ENCODE measurements at regions of chr3 and their contacts with region 1.

Region 1: GRCh38 chr3:124552239-124552638 is 178.0 kb upstream of the UMPS start:
- DNase-seq: no peak
- H3K4me3 ChIP-seq: no peak overlapping the region
- H3K4me3 Mint-ChIP-seq: no peak overlapping the region
- H3K27ac Mint-ChIP-seq: no peak overlapping the region
- H3K4me1 ChIP-seq: no peaks in the 10 kb centered on the region
- H3K4me1 Mint-ChIP-seq: no peaks in the 10 kb centered on the region
- H3K27me3 ChIP-seq: no peaks in the 10 kb centered on the region
- H3K27me3 Mint-ChIP-seq: peaks cover 4% of the 10 kb centered on the region
- CTCF ChIP-seq: no peak

Region 2: GRCh38 chr3:124014366-124014942 is 537.8 kb before region 1 on chr3:
- CTCF ChIA-PET with region 1: no interaction called
- POLR2A ChIA-PET with region 1: no interaction called
- intact Hi-C with region 1: loop called (anchors 1 kb)
- DNase-seq: no peak
- H3K4me3 ChIP-seq: no peak overlapping the region
- H3K4me3 Mint-ChIP-seq: no peak overlapping the region
- H3K27ac Mint-ChIP-seq: no peak overlapping the region
- H3K4me1 ChIP-seq: no peaks in the 10 kb centered on the region
- H3K4me1 Mint-ChIP-seq: peaks cover 6% of the 10 kb centered on the region
- H3K27me3 ChIP-seq: no peaks in the 10 kb centered on the region
- H3K27me3 Mint-ChIP-seq: peaks cover 19% of the 10 kb centered on the region
- CTCF ChIP-seq: no peak

Region 3: GRCh38 chr3:124486324-124486723 is 65.9 kb before region 1 on chr3:
- CTCF ChIA-PET with region 1: interaction called, 11 read pairs
- POLR2A ChIA-PET with region 1: no interaction called
- intact Hi-C with region 1: no loop called
- DNase-seq: no peak
- H3K4me3 ChIP-seq: no peak overlapping the region
- H3K4me3 Mint-ChIP-seq: no peak overlapping the region
- H3K27ac Mint-ChIP-seq: no peak overlapping the region
- H3K4me1 ChIP-seq: no peaks in the 10 kb centered on the region
- H3K4me1 Mint-ChIP-seq: no peaks in the 10 kb centered on the region
- H3K27me3 ChIP-seq: no peaks in the 10 kb centered on the region; the same call in 1 of the 2 replicates
- H3K27me3 Mint-ChIP-seq: peaks cover 10% of the 10 kb centered on the region
- CTCF ChIP-seq: peak in 1 of 2 experiments; percentile 28

Region 4: DNA sequence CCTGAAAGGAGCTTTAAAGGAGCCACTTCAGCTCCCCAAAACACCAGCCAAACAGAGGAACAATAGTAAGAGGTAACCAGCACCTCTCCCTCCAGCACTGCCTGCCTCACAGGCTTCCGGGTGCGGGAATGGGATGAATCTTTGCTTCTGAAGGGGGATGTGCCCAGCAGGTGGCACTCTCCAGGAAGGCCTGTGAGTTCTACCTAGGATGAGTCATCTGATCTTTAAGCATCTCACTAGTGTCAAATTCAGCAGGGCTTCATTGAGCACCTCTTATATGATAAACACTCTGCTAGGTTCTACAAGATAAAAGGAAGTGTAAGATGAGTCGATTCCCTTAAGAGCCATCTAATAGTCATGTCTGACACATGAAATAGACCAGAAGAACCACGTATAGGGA is 59.4 kb before region 1 on chr3:
- CTCF ChIA-PET with region 1: interaction called, 5 read pairs
- POLR2A ChIA-PET with region 1: no interaction called
- intact Hi-C with region 1: loop called (anchors 1 kb)
- DNase-seq: peak; percentile 68
- H3K4me3 ChIP-seq: no peak overlapping the region
- H3K4me3 Mint-ChIP-seq: no peak overlapping the region
- H3K27ac Mint-ChIP-seq: no peak overlapping the region
- H3K4me1 ChIP-seq: no peaks in the 10 kb centered on the region
- H3K4me1 Mint-ChIP-seq: no peaks in the 10 kb centered on the region
- H3K27me3 ChIP-seq: no peaks in the 10 kb centered on the region
- H3K27me3 Mint-ChIP-seq: no peaks in the 10 kb centered on the region
- CTCF ChIP-seq: peak; percentile 60 to 72

Region 5: DNA sequence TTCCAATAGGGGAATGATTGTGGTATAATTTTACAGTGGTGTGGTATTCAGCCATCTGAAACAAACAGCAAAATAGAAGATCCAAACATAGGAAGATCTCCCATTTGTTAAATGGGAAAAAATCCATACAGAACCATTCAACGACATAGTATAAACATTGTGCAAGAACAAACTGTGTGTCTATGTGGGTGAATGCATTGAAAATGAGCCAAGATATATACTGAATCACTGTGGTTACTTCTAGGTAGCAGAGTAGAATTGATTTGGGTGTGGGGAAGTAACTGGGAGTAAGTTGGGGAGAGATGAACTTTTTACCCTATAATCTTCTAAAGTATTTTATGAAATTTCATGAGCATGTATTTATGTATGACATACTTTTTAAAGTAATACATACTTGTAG is 54.9 kb after region 1 on chr3:
- CTCF ChIA-PET with region 1: no interaction called
- POLR2A ChIA-PET with region 1: no interaction called
- intact Hi-C with region 1: no loop called
- DNase-seq: no peak
- H3K4me3 ChIP-seq: no peak overlapping the region
- H3K4me3 Mint-ChIP-seq: no peak overlapping the region
- H3K27ac Mint-ChIP-seq: no peak overlapping the region
- H3K4me1 ChIP-seq: peaks cover 12% of the 10 kb centered on the region; the same call in 1 of the 2 replicates
- H3K4me1 Mint-ChIP-seq: peaks cover 44% of the 10 kb centered on the region
- H3K27me3 ChIP-seq: no peaks in the 10 kb centered on the region
- H3K27me3 Mint-ChIP-seq: no peaks in the 10 kb centered on the region
- CTCF ChIP-seq: no peak

Region 6: GRCh38 chr3:124730129-124730940 is 178.1 kb after region 1 on chr3 and contains the start of gene UMPS:
- CTCF ChIA-PET with region 1: interaction called, 14 read pairs
- POLR2A ChIA-PET with region 1: no interaction called
- intact Hi-C with region 1: no loop called
- DNase-seq: peak; percentile 92 to 95
- H3K4me3 ChIP-seq: peak within 1 kb of the TSS; percentile 86
- H3K4me3 Mint-ChIP-seq: peak within 1 kb of the TSS; percentile 95
- H3K27ac Mint-ChIP-seq: peak within 1 kb of the TSS; percentile 99
- H3K4me1 ChIP-seq: 0 out of 2 replicates have a peak, but pooled peaks cover 7% of the 10 kb centered on the region
- H3K4me1 Mint-ChIP-seq: no peaks in the 10 kb centered on the region
- H3K27me3 ChIP-seq: no peaks in the 10 kb centered on the region
- H3K27me3 Mint-ChIP-seq: no peaks in the 10 kb centered on the region
- CTCF ChIP-seq: no peak
- total RNA-seq, gene UMPS: 59.3 and 62.9 TPM in 2 replicates

Measured in Caco-2 (cell line).